GM13976 (cell line): ENCODE measurements at regions of chr11 and their contacts with region 1.

Region 1: GRCh38 chr11:46308631-46309419 is 31.4 kb downstream of the CREB3L1 start:
- DNase-seq: peak; percentile 88
- CTCF ChIP-seq: peak; percentile 86

Region 2: GRCh38 chr11:45879803-45880686 is 428.8 kb before region 1 on chr11:
- in situ Hi-C with region 1: no loop called
- DNase-seq: no peak
- CTCF ChIP-seq: no peak

Region 3: DNA sequence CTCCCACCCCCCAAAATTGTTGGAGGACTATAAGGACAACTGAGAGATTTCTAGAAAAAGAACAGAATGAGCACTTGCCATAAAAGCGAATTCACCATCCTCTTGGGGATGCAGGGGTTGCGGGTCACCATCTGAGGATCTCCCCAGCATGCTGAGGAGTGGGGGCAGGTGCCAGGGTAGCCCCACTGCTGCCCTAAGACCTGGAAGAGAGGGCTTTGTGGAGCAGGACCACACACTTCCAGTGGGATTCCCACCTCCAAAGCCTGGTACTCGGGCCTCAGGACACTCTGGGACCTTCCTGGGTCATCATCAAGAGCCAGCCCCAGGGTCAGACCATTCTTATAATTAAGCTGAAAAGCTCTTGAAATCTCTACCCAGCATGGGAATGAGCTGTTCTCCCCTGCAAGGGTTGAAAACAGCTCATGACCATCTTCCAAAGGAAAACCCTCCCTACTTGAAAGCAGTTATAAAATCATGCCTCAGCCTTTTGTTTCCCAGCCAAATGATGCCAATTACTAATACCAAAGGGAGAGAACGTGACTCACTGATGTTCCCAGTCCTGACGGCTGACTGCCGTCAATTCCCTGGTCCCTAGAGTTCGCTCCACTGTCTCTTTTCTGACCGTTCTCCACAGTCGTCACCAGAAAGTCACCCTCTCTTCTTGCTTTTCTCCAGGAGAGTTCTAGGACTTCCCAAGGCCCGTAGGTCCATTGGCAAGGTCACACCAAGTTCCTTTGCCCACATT is 108.1 kb before region 1 on chr11:
- in situ Hi-C with region 1: no loop called
- DNase-seq: no peak
- CTCF ChIP-seq: no peak

Region 4: DNA sequence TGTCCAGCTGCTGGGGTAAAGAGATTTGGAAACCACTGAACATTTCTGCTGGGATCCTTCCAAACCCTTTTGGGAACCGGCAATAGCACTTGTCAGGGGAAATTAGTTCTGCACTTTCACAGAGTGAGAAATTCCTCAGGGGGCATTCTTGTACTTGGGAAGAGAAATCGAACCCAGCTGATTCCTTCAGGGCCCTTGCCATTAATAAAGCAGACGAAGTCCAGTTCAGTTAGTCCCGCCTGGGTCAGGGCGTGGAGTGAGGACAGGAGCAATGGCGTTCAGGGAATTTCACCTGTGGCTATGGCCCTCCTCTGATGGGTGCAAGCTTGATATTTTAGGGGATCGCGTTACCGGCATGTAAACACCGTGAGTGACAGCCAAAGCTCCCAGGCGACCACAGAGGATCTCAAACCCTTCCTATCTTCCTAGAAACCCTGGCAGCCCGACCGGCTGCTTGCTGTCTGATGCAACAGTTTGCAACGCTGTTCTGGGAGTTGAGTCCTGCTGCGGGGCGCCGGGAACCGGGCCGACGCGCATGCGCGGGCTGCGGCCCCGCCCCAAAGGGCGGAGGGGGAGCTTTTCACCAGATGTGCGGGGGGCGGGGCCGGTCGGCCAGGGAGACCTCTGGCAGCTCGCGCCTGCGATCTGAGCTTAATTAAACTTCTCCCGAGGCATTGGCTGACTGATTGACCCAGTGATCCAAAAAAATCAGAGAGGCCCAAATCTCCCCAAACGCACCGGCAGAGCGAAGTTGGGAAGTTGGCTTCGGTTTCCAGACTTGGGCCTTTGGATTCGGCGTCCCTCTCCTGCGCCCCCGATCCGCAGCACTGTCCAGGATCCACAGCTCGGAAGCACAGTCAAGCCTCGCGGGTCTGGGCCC is 65.7 kb before region 1 on chr11:
- in situ Hi-C with region 1: loop called (anchors 5 kb)
- DNase-seq: peak; percentile 97
- CTCF ChIP-seq: no peak